Lower leg skin (tissue), 4 donors: ENCODE measurements at regions of chr1 and their contacts with region 1.

Region 1: GRCh38 chr1:218694636-218695035 is 349.5 kb downstream of the TGFB2 start:
- DNase-seq: no peak
- H3K4me3 ChIP-seq: no peak overlapping the region
- CTCF ChIP-seq: no peak
- POLR2A ChIP-seq: no peak

Region 2: DNA sequence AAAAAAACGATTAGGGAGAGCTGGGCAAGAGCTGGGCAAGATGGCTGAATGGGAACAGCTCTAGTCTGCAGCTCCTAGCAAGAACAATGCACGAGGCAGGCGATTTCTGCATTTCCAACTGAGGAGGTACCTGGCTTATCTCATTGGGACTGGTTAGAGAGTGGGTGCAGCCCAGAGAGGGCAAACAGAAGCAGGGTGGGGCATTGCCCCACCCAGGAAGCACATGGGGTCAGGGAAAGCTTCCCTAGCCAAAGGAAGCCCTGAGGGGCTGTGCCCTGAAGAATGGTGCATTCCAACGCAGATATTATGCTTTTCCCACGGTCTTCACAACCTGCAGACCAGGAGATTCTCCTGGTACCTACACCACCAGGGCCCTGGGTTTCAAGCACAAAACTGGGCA is 1315.3 kb before region 1 on chr1:
- intact Hi-C with region 1: loop called (anchors 5 kb)
- DNase-seq: no peak
- H3K4me3 ChIP-seq: no peak overlapping the region
- CTCF ChIP-seq: no peak
- POLR2A ChIP-seq: no peak

Region 3: DNA sequence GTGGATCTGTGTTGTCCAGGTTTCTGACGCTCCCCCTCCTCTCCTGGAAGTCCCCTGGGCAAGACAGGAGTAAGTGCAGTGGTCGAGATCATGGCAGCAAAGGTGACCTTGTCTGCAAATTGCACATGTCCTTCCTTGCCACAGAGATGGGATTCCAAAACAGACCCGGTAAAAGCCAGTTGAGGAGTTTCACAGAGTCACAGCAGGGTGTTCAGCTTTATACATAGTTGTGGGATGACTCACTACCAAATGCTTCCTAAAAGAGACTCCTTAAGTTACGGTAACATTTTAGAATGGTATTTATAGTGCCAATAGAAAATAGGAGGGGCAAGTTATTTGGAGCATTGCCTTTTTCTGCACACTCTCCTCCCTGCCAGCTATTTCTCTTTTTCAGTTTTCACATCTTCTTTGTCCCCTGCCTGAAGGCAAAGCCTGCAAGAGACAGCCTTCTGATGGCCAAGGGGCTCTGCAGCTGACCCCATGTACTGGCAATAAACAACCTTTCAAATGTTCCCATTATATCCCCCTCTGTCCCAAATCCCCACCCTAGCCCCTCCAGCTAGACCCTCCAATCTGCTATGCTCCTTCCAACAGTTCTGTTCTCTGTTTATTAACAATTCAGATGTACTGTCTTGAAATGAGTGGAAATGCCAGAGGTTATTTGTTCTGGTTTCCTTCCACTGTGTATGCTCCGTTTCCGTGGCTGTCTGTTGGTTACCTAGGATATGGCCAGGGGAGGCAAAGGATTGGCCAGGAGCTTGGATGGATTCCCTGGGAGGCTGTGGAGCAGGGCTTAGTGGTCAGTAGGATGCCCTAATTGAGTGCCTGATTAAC is 234.5 kb before region 1 on chr1:
- intact Hi-C with region 1: no loop called
- DNase-seq: no peak
- H3K4me3 ChIP-seq: no peak overlapping the region
- CTCF ChIP-seq: no peak
- POLR2A ChIP-seq: no peak